Naive thymus-derived CD4-positive, alpha-beta T cell (primary cell): ENCODE measurements at regions of chr4 and their contacts with region 1.

Region 1: DNA sequence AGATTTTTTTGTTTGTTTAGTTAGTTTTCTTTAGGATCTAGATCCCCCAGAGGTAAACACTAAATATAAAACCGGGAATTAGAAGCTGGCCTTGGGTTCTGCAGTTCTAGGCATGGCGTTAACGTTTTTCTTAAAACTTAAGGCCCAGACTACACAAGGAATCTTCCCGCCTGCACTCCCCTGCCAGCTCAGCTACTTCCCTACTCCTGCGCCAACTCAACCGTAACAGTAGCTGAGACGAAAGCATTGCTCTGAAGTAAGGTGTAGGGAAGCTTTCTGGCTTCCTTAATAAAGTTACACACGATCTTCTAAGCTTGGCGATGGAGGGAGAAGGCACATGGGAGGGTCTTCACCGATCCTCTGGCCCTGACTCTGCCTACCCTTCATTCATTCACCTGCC is 37.1 kb downstream of the CPE start:
- DNase-seq: no peak
- ATAC-seq: no peak
- H3K4me3 ChIP-seq: no peak overlapping the region
- H3K4me3 Mint-ChIP-seq: no peak overlapping the region
- H3K27ac ChIP-seq: no peak overlapping the region
- H3K27ac Mint-ChIP-seq: no peak overlapping the region
- H3K4me1 ChIP-seq: no peaks in the 10 kb centered on the region
- H3K4me1 Mint-ChIP-seq: no peaks in the 10 kb centered on the region
- H3K27me3 ChIP-seq: no peaks in the 10 kb centered on the region
- H3K27me3 Mint-ChIP-seq: peaks cover 0 to 15% (median 13%) of the 10 kb centered on the region in 5 donors

Region 2: GRCh38 chr4:165378745-165379677 is 36.9 kb before region 1 on chr4 and contains the start of gene CPE:
- CTCF ChIA-PET with region 1: no interaction called
- POLR2A ChIA-PET with region 1: interaction called, 3 read pairs
- intact Hi-C with region 1: loop called in 1 of 2 experiments (anchors 5 kb)
- DNase-seq: peak; percentile 19 to 63 (median 57)
- ATAC-seq: peak; percentile 97
- H3K4me3 ChIP-seq: peak within 1 kb of the TSS; percentile 36
- H3K4me3 Mint-ChIP-seq: peak within 1 kb of the TSS; percentile 45 to 85 (median 79)
- H3K27ac ChIP-seq: no peak within 1 kb of the TSS
- H3K27ac Mint-ChIP-seq: no peak within 1 kb of the TSS
- H3K4me1 ChIP-seq: no peaks in the 10 kb centered on the region
- H3K4me1 Mint-ChIP-seq: peaks cover 0 to 14% (median 4%) of the 10 kb centered on the region in 7 donors
- H3K27me3 ChIP-seq: peaks cover 0 to 4% of the 10 kb centered on the region in 2 donors
- H3K27me3 Mint-ChIP-seq: peaks cover 59 to 84% (median 66%) of the 10 kb centered on the region in 5 donors
- total RNA-seq, gene CPE: not detected